Right lobe of liver (tissue), 6 donors: ENCODE measurements at regions of chr2 and their contacts with region 1.

Region 1: DNA sequence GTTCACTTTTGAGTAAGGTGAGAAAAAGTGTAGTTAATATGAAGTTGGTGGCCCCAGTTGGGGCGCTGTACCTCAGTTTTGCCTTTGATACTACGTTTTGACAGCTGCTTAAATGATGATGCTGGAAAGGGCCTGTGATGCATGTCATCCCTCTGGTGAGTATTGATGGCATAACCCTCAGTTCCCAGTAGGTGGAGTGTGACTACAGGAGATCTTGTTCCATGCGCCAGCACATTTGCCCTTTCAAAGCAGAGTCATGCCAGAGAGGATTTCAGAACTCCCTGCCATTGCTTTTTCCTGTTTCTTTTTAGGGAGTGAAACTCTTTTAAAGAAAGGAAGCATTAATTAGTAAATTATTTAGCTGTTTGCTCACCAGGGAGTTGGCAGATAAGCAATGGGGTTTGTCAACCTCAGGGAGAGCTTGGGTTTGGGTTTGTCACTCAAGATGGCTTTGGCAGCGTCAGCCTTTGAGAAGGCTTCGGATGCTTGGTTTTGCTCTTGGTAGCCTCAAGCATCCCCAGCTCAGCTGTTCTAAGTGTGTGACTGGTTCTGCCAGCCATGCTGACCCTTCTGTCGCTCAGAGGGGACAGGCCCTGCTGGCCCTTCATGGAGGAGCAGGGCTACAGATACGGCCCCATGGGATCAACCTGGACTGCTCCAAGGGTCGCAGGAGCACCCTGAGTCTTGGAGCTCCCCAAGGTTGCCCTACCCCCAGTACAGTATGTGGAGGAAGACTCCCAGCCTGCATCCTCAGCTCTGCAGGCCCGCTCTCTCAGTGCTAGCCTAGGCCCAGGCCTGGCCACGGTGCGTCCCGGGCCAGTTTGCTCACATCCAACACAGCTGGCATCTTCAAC is 29.1 kb downstream of the ARMC9 start:
- DNase-seq: peak in 1 of 3 donors; percentile 71
- ATAC-seq: peak; percentile 97 to 99 (median 98)
- H3K4me3 ChIP-seq: no peak overlapping the region
- H3K27ac ChIP-seq: no peak overlapping the region
- H3K4me1 ChIP-seq: no peaks in the 10 kb centered on the region
- H3K27me3 ChIP-seq: no peaks in the 10 kb centered on the region
- CTCF ChIP-seq: peak; percentile 76 to 83 (median 78)
- POLR2A ChIP-seq: no peak

Region 2: GRCh38 chr2:231161877-231162329 is 65.6 kb before region 1 on chr2:
- intact Hi-C with region 1: no loop called
- DNase-seq: no peak
- ATAC-seq: peak; percentile 12 to 67 (median 30)
- H3K4me3 ChIP-seq: no peak overlapping the region
- H3K27ac ChIP-seq: no peak overlapping the region
- H3K4me1 ChIP-seq: no peaks in the 10 kb centered on the region
- H3K27me3 ChIP-seq: no peaks in the 10 kb centered on the region
- CTCF ChIP-seq: no peak
- POLR2A ChIP-seq: no peak

Region 3: GRCh38 chr2:231452799-231453508 is 225.4 kb after region 1 on chr2:
- intact Hi-C with region 1: loop called in 1 of 2 experiments (anchors 10 kb)
- DNase-seq: peak in 1 of 3 donors; percentile 21
- ATAC-seq: peak in 2 of 4 donors; percentile 12 to 17
- H3K4me3 ChIP-seq: no peak overlapping the region
- H3K27ac ChIP-seq: no peak overlapping the region
- H3K4me1 ChIP-seq: no peaks in the 10 kb centered on the region
- H3K27me3 ChIP-seq: no peaks in the 10 kb centered on the region
- CTCF ChIP-seq: no peak
- POLR2A ChIP-seq: no peak

Region 4: GRCh38 chr2:231820786-231821303 is 593.3 kb after region 1 on chr2:
- intact Hi-C with region 1: no loop called
- DNase-seq: no peak
- ATAC-seq: no peak
- H3K4me3 ChIP-seq: no peak overlapping the region
- H3K27ac ChIP-seq: no peak overlapping the region
- H3K4me1 ChIP-seq: no peaks in the 10 kb centered on the region
- H3K27me3 ChIP-seq: no peaks in the 10 kb centered on the region
- CTCF ChIP-seq: no peak
- POLR2A ChIP-seq: no peak